Endothelial cell of umbilical vein (primary cell): ENCODE measurements at regions of chr3 and their contacts with region 1.

Region 1: DNA sequence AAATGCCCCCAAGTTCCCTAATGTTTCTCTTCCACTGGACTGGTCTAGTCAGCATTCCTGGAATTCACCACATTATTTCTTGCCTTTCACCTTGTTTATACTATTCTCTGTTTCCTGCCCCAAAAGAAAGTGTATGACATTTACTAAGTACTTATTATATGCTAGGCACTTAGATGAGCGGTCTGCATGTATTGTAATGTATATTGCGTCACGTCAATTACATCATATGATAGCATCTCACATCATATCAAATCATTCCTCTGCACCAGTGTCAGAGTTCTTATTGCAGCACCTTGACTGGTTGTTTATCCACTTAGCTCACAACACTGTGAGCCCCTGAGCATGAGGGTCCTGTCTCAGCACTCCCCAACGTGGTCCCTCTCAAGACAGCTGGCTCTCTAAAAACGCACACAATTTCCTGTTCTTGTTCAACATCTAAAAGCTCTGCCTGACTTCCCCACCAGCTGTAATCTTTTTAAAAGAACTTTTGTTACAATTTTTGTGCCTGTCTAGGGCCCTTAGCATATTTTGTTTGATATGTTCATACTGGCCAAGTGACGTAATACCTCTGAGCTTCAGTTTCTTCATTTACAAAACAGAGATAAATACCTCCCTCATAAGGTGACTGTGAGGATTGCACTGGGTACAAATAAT is 58.8 kb downstream of the ARHGAP31 start:
- DNase-seq: peak; percentile 63
- H3K4me3 ChIP-seq: no peak overlapping the region
- H3K27ac ChIP-seq: no peak overlapping the region
- H3K4me1 ChIP-seq: peaks cover 53% of the 10 kb centered on the region
- H3K27me3 ChIP-seq: no peaks in the 10 kb centered on the region
- CTCF ChIP-seq: no peak
- POLR2A ChIP-seq: no peak

Region 2: GRCh38 chr3:119293871-119294695 is 58.9 kb before region 1 on chr3 and contains the start of gene ARHGAP31:
- CTCF ChIA-PET with region 1: interaction called, 58 read pairs
- POLR2A ChIA-PET with region 1: interaction called, 4 read pairs
- dilution Hi-C with region 1: no loop called
- intact Hi-C with region 1: loop called (anchors 1 kb)
- DNase-seq: peak; percentile 90
- H3K4me3 ChIP-seq: peak within 1 kb of the TSS; percentile 84 to 92 (median 86)
- H3K27ac ChIP-seq: peak within 1 kb of the TSS; percentile 78
- H3K4me1 ChIP-seq: peaks cover 32% of the 10 kb centered on the region
- H3K27me3 ChIP-seq: no peaks in the 10 kb centered on the region
- CTCF ChIP-seq: no peak
- POLR2A ChIP-seq: peak; percentile 77
- total RNA-seq, gene ARHGAP31: 64.8 and 65.8 TPM in 2 replicates

Region 3: DNA sequence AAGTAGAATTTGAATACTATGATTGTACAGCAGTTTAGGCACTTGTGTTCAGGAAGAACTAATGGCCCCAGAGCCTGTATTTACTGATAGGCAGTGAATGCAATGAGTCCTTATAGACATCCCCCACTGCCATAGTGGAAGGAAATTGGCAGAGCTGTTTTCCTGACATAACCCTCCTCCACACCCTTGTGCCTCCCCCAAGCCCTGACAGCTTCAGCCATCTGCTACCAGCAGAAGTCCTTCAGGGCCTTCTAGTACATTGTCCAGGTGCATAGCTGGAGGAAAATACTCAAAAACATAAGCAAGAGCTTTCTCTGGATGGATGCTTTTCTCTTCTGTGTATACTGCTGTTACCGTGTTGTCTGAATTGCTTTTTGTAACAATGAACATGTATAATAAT is 38.2 kb before region 1 on chr3:
- CTCF ChIA-PET with region 1: interaction called, 13 read pairs
- POLR2A ChIA-PET with region 1: no interaction called
- dilution Hi-C with region 1: no loop called
- intact Hi-C with region 1: no loop called
- DNase-seq: peak; percentile 45
- H3K4me3 ChIP-seq: no peak overlapping the region
- H3K27ac ChIP-seq: no peak overlapping the region
- H3K4me1 ChIP-seq: peaks cover 23% of the 10 kb centered on the region
- H3K27me3 ChIP-seq: no peaks in the 10 kb centered on the region
- CTCF ChIP-seq: no peak
- POLR2A ChIP-seq: no peak

Region 4: GRCh38 chr3:119322835-119323722 is 29.9 kb before region 1 on chr3:
- CTCF ChIA-PET with region 1: interaction called, 18 read pairs
- POLR2A ChIA-PET with region 1: interaction called, 4 read pairs
- dilution Hi-C with region 1: no loop called
- intact Hi-C with region 1: loop called (anchors 1 kb)
- DNase-seq: peak; percentile 90
- H3K4me3 ChIP-seq: peak overlapping the region; percentile 27 to 69 (median 44)
- H3K27ac ChIP-seq: peak overlapping the region; percentile 61
- H3K4me1 ChIP-seq: peaks cover 22% of the 10 kb centered on the region
- H3K27me3 ChIP-seq: no peaks in the 10 kb centered on the region
- CTCF ChIP-seq: peak in 1 of 2 donors; percentile 11
- POLR2A ChIP-seq: peak; percentile 57

Region 5: DNA sequence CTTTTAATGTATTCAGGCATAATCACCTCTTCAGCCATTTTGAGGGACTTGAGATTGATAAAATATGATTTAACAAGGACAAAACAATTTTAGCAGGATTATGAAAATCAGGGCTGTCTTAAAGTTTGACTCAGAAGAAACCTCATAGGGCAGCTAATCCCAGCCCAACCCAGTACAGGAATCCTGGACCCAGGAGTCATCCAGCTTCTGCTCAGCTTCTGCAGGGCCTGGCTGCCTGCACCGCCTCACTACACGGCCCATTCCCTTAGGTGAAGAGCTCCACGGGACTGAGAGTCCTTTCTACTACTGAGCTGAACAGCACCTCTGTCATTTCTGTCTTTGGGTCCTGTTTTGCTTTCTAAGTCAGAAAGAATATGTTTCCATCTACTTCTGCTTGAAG is 21.3 kb before region 1 on chr3:
- CTCF ChIA-PET with region 1: interaction called, 12 read pairs
- POLR2A ChIA-PET with region 1: no interaction called
- dilution Hi-C with region 1: no loop called
- intact Hi-C with region 1: no loop called
- DNase-seq: no peak
- H3K4me3 ChIP-seq: no peak overlapping the region
- H3K27ac ChIP-seq: no peak overlapping the region
- H3K4me1 ChIP-seq: no peaks in the 10 kb centered on the region
- H3K27me3 ChIP-seq: no peaks in the 10 kb centered on the region
- CTCF ChIP-seq: no peak
- POLR2A ChIP-seq: no peak